GM13977 (cell line): ENCODE measurements at regions of chr2 and their contacts with region 1.

Region 1: GRCh38 chr2:102020596-102021181 is 28.9 kb downstream of the IL1R2 start:
- DNase-seq: peak; percentile 73
- CTCF ChIP-seq: peak; percentile 96

Region 2: GRCh38 chr2:102240640-102241370 is 220.1 kb after region 1 on chr2:
- in situ Hi-C with region 1: loop called (anchors 10 kb)
- DNase-seq: peak; percentile 90
- CTCF ChIP-seq: peak; percentile 97

Region 3: GRCh38 chr2:102442967-102443828 is 422.5 kb after region 1 on chr2:
- in situ Hi-C with region 1: loop called (anchors 10 kb)
- DNase-seq: peak; percentile 60
- CTCF ChIP-seq: peak; percentile 82

Region 4: GRCh38 chr2:102581911-102582310 is 561.2 kb after region 1 on chr2:
- in situ Hi-C with region 1: no loop called
- DNase-seq: no peak
- CTCF ChIP-seq: no peak